CD4-positive, alpha-beta T cell (primary cell): ENCODE measurements at regions of chr6 and their contacts with region 1.

Region 1: DNA sequence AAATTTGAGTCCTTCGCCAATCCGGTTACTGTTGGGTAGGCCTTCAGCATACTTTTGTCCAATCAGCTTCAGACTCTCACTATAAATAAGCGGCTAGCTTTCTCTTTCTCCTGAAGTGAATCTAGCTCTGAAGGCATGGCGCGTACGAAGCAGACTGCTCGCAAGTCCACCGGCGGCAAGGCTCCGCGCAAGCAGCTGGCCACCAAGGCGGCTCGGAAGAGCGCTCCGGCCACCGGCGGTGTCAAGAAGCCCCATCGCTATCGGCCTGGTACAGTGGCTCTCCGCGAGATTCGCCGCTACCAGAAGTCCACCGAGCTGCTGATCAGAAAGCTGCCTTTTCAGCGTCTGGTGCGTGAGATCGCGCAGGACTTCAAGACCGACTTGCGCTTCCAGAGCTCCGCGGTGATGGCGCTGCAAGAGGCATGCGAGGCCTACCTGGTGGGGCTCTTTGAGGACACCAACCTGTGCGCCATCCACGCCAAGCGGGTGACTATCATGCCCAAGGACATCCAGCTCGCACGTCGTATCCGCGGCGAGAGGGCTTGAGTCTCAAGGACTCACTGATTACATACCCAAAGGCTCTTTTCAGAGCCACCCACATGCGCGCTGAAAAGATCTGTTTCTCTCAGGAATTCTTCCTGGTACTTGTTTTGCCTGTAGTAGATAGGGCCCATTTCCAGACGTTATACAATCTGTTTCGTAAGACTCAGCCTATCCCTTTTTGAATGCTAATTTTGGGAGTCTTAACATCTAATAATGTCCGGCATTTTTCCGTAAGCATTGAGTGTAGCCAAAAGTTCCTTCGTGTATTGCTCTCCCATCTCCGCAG is 102.0 kb downstream of the OR2B2 start:
- DNase-seq: peak; percentile 63 to 98 (median 75)
- ATAC-seq: peak; percentile 61
- H3K4me3 ChIP-seq: peak overlapping the region; percentile 64
- H3K4me3 Mint-ChIP-seq: peak overlapping the region; percentile 95
- H3K27ac ChIP-seq: peak overlapping the region; percentile 69 to 81
- H3K27ac Mint-ChIP-seq: peak overlapping the region; percentile 96
- H3K4me1 ChIP-seq: peaks cover 39% of the 10 kb centered on the region
- H3K4me1 Mint-ChIP-seq: peaks cover 68% of the 10 kb centered on the region
- H3K27me3 ChIP-seq: no peaks in the 10 kb centered on the region
- H3K27me3 Mint-ChIP-seq: no peaks in the 10 kb centered on the region
- CTCF ChIP-seq: no peak

Region 2: DNA sequence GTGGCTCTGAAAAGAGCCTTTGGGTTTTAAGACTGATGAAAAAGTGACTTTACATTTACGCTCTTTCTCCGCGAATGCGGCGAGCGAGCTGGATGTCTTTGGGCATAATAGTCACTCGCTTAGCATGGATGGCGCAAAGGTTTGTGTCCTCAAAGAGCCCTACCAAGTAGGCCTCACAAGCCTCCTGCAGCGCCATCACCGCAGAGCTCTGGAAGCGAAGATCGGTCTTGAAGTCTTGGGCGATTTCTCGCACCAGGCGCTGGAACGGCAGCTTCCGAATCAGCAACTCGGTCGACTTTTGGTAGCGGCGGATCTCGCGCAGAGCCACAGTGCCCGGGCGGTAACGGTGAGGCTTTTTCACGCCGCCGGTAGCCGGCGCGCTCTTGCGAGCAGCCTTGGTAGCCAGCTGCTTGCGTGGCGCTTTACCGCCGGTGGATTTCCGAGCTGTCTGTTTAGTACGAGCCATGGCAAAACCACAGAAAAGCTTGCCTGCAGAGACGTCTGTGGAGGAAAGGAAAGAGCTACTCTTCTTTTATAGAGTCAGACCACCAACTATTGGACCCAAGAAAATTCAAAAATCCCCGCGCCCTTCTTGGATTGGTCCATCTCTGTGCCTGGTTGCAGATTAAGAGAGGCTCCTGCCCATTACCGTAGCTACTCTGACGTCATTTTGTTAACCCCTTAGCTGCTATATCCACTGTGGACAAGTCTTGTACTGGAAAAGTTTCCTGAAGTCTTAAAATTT is 1778.4 kb before region 1 on chr6:
- CTCF ChIA-PET with region 1: no interaction called
- POLR2A ChIA-PET with region 1: interaction called, 30 read pairs
- intact Hi-C with region 1: loop called in 1 of 2 experiments (anchors 5 kb)
- DNase-seq: peak; percentile 73 to 94 (median 81)
- ATAC-seq: peak; percentile 65
- H3K4me3 ChIP-seq: peak overlapping the region; percentile 64
- H3K4me3 Mint-ChIP-seq: peak overlapping the region; percentile 97
- H3K27ac ChIP-seq: peak overlapping the region; percentile 42 to 72
- H3K27ac Mint-ChIP-seq: peak overlapping the region; percentile 99
- H3K4me1 ChIP-seq: peaks cover 35% of the 10 kb centered on the region
- H3K4me1 Mint-ChIP-seq: peaks cover 46% of the 10 kb centered on the region
- H3K27me3 ChIP-seq: no peaks in the 10 kb centered on the region
- H3K27me3 Mint-ChIP-seq: no peaks in the 10 kb centered on the region
- CTCF ChIP-seq: peak; percentile 22

Region 3: DNA sequence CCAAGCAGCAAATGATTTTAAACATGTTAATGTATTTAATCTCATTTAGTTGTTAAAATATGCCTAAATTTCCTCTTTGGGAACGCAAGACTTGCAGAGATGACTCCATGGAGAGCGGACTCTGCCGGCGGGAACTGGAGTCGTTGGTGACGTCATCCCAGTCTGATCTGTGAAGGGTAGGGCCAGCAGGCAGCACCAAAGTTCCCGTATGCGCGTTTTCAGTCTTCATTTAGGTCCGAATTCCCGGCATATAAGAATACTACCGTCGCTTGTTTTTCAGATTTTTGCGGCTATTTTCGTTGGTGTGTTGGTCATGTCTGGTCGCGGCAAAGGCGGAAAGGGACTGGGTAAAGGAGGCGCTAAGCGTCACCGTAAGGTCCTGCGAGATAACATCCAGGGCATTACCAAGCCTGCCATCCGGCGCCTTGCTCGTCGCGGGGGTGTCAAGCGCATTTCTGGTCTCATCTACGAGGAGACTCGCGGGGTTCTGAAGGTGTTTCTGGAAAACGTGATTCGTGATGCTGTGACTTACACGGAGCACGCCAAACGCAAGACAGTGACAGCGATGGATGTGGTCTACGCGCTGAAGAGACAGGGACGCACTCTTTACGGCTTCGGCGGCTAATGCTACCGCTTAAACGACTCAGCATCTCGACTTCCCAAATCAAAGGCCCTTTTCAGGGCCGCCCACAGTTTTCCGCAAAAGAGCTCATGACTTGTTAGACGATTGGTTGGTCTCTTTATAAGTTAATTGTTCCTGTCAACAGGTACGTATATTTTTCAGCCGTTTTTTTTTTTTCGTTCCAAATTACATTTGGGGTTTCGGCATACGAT is 1605.6 kb before region 1 on chr6:
- CTCF ChIA-PET with region 1: interaction called, 3 read pairs
- POLR2A ChIA-PET with region 1: interaction called, 77 read pairs
- intact Hi-C with region 1: no loop called
- DNase-seq: peak; percentile 73 to 98 (median 80)
- ATAC-seq: peak; percentile 69
- H3K4me3 ChIP-seq: peak overlapping the region; percentile 68
- H3K4me3 Mint-ChIP-seq: no peak overlapping the region
- H3K27ac ChIP-seq: peak overlapping the region; percentile 89 to 90
- H3K27ac Mint-ChIP-seq: no peak overlapping the region
- H3K4me1 ChIP-seq: peaks cover 34% of the 10 kb centered on the region
- H3K4me1 Mint-ChIP-seq: peaks cover 8% of the 10 kb centered on the region
- H3K27me3 ChIP-seq: no peaks in the 10 kb centered on the region
- H3K27me3 Mint-ChIP-seq: no peaks in the 10 kb centered on the region
- CTCF ChIP-seq: peak; percentile 32

Region 4: DNA sequence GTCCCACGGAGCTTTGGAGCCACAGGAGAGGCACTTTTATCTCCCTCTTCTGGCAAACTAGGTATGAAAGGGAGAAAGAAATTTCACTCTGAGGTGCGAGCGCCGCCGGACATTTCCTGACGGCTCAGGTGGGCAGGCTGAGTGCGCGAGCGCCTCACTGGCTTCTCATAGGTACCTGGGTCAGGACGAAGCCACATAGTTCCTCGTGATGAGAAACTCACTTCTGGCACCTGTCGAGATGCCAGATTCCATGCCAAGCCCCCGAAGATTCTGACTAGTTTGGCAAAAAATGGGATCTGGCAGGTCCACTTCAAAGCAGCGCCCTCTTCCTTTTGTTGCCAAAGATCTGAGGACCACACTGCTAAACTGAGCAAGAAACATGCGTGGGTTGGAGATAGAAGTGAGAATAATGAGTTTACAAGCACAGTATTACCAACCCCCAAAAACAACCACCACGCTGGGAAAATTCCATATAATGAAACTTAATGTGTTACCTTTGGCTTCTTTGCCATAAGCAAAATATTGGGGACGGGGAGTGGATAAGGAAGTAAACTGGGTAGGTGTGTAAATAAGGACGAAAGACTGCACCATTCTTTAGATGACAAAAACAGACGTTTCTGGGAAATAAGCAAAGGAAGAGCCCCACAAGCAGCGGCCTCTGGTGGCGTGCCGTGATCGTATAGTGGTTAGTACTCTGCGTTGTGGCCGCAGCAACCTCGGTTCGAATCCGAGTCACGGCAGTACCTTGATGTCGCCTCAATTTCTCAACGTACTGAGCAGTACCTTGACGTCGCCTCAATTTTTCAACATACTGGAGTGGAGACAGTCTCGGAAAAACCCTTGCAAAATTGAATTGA is 652.5 kb before region 1 on chr6:
- CTCF ChIA-PET with region 1: no interaction called
- POLR2A ChIA-PET with region 1: interaction called, 12 read pairs
- intact Hi-C with region 1: no loop called
- DNase-seq: peak; percentile 73 to 93 (median 85)
- ATAC-seq: peak; percentile 88
- H3K4me3 ChIP-seq: peak overlapping the region; percentile 59
- H3K4me3 Mint-ChIP-seq: peak overlapping the region; percentile 90
- H3K27ac ChIP-seq: peak overlapping the region in 1 of 2 donors; percentile 32
- H3K27ac Mint-ChIP-seq: peak overlapping the region; percentile 96
- H3K4me1 ChIP-seq: peaks cover 22% of the 10 kb centered on the region
- H3K4me1 Mint-ChIP-seq: peaks cover 44% of the 10 kb centered on the region
- H3K27me3 ChIP-seq: no peaks in the 10 kb centered on the region
- H3K27me3 Mint-ChIP-seq: peaks cover 7% of the 10 kb centered on the region
- CTCF ChIP-seq: peak; percentile 78

Region 5: DNA sequence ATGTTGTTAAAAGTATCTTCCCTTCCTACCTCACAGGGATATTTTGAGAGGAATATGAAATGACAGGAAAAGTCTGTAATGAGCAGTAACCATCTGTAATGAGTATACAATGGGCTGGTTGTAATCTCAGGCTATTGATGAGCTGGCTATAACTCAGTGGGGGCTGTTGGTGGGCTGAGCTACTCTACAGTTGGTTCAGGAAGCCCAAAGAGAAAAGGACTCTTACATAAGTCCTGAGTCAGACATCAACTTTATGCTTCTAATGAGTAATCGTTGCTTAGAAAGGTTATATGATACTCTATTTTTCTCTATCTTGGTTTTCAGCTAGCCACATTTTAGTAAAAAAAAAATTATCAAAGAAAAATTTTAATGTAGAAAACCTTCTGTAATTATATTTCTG is 395.2 kb before region 1 on chr6:
- CTCF ChIA-PET with region 1: no interaction called
- POLR2A ChIA-PET with region 1: no interaction called
- intact Hi-C with region 1: no loop called
- DNase-seq: no peak
- ATAC-seq: no peak
- H3K4me3 ChIP-seq: no peak overlapping the region
- H3K4me3 Mint-ChIP-seq: no peak overlapping the region
- H3K27ac ChIP-seq: no peak overlapping the region
- H3K27ac Mint-ChIP-seq: no peak overlapping the region
- H3K4me1 ChIP-seq: no peaks in the 10 kb centered on the region
- H3K4me1 Mint-ChIP-seq: no peaks in the 10 kb centered on the region
- H3K27me3 ChIP-seq: peaks cover 3 to 6% of the 10 kb centered on the region in 2 experiments
- H3K27me3 Mint-ChIP-seq: peaks cover 18% of the 10 kb centered on the region
- CTCF ChIP-seq: no peak

Region 6: DNA sequence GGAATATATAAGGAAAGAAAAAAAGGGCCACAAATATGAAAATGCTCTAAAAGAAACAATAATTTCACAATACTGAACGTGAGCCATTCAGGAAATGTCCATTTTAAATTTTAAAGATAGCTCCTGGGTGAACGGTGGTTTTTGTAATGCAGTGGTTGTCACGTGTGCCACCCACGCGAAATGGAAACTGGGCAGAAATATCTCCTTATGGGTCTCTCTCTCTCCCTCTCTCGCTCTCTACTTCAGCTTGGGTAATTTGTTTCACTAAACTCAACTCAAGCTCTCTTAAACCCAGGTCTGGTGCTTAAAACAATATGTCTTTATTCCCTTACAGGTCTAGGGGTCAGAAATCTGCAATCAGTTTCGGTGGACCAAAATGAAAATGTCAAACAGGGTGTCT is 48.8 kb before region 1 on chr6:
- CTCF ChIA-PET with region 1: no interaction called
- POLR2A ChIA-PET with region 1: interaction called, 20 read pairs
- intact Hi-C with region 1: loop called in 1 of 2 experiments (anchors 10 kb)
- DNase-seq: peak in 2 of 14 experiments; percentile 11 to 17
- ATAC-seq: peak; percentile 41
- H3K4me3 ChIP-seq: no peak overlapping the region
- H3K4me3 Mint-ChIP-seq: peak overlapping the region; percentile 94
- H3K27ac ChIP-seq: no peak overlapping the region
- H3K27ac Mint-ChIP-seq: peak overlapping the region; percentile 98
- H3K4me1 ChIP-seq: peaks cover 14% of the 10 kb centered on the region
- H3K4me1 Mint-ChIP-seq: peaks cover 40% of the 10 kb centered on the region
- H3K27me3 ChIP-seq: no peaks in the 10 kb centered on the region
- H3K27me3 Mint-ChIP-seq: peaks cover 2% of the 10 kb centered on the region
- CTCF ChIP-seq: no peak

Region 7: GRCh38 chr6:27825025-27825793 is 15.1 kb after region 1 on chr6:
- CTCF ChIA-PET with region 1: interaction called, 7 read pairs
- POLR2A ChIA-PET with region 1: interaction called, 915 read pairs
- intact Hi-C with region 1: loop called in 1 of 2 experiments (anchors 1 kb)
- DNase-seq: peak in 2 of 14 experiments; percentile 27 to 38
- ATAC-seq: no peak
- H3K4me3 ChIP-seq: peak overlapping the region; percentile 82
- H3K4me3 Mint-ChIP-seq: peak overlapping the region; percentile 90
- H3K27ac ChIP-seq: peak overlapping the region; percentile 77 to 87
- H3K27ac Mint-ChIP-seq: peak overlapping the region; percentile 99
- H3K4me1 ChIP-seq: peaks cover 8% of the 10 kb centered on the region
- H3K4me1 Mint-ChIP-seq: peaks cover 38% of the 10 kb centered on the region
- H3K27me3 ChIP-seq: no peaks in the 10 kb centered on the region
- H3K27me3 Mint-ChIP-seq: no peaks in the 10 kb centered on the region
- CTCF ChIP-seq: no peak

Region 8: DNA sequence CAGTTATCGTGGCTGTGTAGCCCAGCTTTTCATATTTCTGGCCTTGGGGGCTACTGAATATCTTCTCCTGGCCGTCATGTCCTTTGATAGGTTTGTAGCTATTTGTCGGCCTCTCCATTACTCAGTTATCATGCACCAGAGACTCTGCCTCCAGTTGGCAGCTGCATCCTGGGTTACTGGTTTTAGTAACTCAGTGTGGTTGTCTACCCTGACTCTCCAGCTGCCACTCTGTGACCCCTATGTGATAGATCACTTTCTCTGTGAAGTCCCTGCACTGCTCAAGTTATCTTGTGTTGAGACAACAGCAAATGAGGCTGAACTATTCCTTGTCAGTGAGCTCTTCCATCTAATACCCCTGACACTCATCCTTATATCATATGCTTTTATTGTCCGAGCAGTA is 147.4 kb after region 1 on chr6:
- CTCF ChIA-PET with region 1: no interaction called
- POLR2A ChIA-PET with region 1: no interaction called
- intact Hi-C with region 1: no loop called
- DNase-seq: no peak
- ATAC-seq: no peak
- H3K4me3 ChIP-seq: no peak overlapping the region
- H3K4me3 Mint-ChIP-seq: no peak overlapping the region
- H3K27ac ChIP-seq: no peak overlapping the region
- H3K27ac Mint-ChIP-seq: no peak overlapping the region
- H3K4me1 ChIP-seq: no peaks in the 10 kb centered on the region
- H3K4me1 Mint-ChIP-seq: no peaks in the 10 kb centered on the region
- H3K27me3 ChIP-seq: peaks cover 14 to 41% of the 10 kb centered on the region in 2 experiments
- H3K27me3 Mint-ChIP-seq: peaks cover 65% of the 10 kb centered on the region
- CTCF ChIP-seq: no peak

Region 9: GRCh38 chr6:27977387-27977786 is 167.2 kb after region 1 on chr6:
- CTCF ChIA-PET with region 1: no interaction called
- POLR2A ChIA-PET with region 1: no interaction called
- intact Hi-C with region 1: no loop called
- DNase-seq: no peak
- ATAC-seq: no peak
- H3K4me3 ChIP-seq: no peak overlapping the region
- H3K4me3 Mint-ChIP-seq: no peak overlapping the region
- H3K27ac ChIP-seq: no peak overlapping the region
- H3K27ac Mint-ChIP-seq: no peak overlapping the region
- H3K4me1 ChIP-seq: no peaks in the 10 kb centered on the region
- H3K4me1 Mint-ChIP-seq: no peaks in the 10 kb centered on the region
- H3K27me3 ChIP-seq: peaks cover 4 to 7% of the 10 kb centered on the region in 2 experiments
- H3K27me3 Mint-ChIP-seq: peaks cover 59% of the 10 kb centered on the region
- CTCF ChIP-seq: no peak